Breast epithelium (tissue), 4 donors: ENCODE measurements at regions of chr2 and their contacts with region 1.

Region 1: GRCh38 chr2:203650860-203651613 is 55.4 kb upstream of the CD28 start:
- DNase-seq: no peak
- H3K4me3 ChIP-seq: no peak overlapping the region
- H3K27ac ChIP-seq: peak overlapping the region; percentile 89 to 90
- H3K4me1 ChIP-seq: peaks cover 0 to 14% of the 10 kb centered on the region in 2 donors
- H3K27me3 ChIP-seq: no peaks in the 10 kb centered on the region
- CTCF ChIP-seq: peak in 2 of 3 donors; percentile 42 to 45
- POLR2A ChIP-seq: no peak

Region 2: DNA sequence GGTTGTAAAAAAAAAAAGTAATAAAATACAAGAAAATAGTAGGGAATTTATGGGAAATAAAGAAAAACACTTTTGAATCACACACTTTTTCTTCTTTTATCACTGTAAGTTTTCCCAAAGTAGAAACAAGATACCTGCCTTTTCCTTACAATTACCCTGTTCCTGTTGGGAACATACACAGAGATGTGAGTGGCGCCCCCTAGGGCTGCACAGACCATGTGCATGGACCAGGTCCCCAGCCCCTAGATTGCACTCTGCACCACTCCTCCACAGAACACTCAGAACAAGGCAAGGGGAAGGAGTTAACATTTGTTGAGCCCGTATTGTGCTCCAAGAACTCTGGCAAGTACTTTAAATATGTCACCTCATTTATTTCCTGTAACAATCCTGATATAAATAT is 1912.6 kb after region 1 on chr2:
- intact Hi-C with region 1: loop called (anchors 10 kb)
- DNase-seq: no peak
- H3K4me3 ChIP-seq: no peak overlapping the region
- H3K27ac ChIP-seq: no peak overlapping the region
- H3K4me1 ChIP-seq: no peaks in the 10 kb centered on the region
- H3K27me3 ChIP-seq: no peaks in the 10 kb centered on the region
- CTCF ChIP-seq: no peak
- POLR2A ChIP-seq: no peak